Posterior cingulate gyrus (tissue), 11 donors: ENCODE measurements at regions of chr22 and their contacts with region 1.

Region 1: DNA sequence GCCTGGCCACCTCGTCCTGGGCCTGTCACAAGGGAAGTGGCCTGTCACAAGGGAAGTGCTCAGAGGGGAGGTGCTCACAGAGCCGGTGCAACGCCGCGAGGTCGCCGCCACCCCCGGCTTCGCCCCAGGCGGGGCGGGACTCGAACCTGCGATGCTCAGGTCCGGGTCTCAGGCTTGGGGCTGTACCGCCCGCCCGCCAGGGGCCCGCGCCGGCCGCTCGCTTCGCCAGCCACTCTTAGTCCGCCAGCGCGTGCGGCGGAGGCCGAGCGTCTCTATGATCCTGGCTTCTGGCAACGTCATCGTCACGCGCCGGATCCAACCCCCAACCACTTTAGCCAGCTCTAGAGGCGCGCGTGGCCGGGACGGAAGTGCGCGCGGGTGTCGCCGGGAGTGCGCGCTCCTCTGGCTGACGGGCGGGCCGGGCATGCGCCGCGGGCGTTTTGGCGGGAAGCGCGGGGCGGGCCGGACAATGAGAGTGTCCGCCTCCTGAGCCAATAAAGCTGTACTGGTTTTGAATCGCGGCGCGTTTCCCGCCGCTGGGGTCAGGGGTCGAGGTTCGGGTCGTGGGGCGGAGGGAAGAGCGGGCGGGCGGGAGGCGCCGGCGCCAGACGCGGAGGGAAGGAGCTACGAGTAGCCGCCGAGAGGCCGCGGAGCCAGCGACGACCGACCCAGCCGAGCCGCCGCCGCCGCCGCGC is at the start of gene TRMT2A:
- DNase-seq: peak; percentile 94 to 99 (median 96)

Region 2: DNA sequence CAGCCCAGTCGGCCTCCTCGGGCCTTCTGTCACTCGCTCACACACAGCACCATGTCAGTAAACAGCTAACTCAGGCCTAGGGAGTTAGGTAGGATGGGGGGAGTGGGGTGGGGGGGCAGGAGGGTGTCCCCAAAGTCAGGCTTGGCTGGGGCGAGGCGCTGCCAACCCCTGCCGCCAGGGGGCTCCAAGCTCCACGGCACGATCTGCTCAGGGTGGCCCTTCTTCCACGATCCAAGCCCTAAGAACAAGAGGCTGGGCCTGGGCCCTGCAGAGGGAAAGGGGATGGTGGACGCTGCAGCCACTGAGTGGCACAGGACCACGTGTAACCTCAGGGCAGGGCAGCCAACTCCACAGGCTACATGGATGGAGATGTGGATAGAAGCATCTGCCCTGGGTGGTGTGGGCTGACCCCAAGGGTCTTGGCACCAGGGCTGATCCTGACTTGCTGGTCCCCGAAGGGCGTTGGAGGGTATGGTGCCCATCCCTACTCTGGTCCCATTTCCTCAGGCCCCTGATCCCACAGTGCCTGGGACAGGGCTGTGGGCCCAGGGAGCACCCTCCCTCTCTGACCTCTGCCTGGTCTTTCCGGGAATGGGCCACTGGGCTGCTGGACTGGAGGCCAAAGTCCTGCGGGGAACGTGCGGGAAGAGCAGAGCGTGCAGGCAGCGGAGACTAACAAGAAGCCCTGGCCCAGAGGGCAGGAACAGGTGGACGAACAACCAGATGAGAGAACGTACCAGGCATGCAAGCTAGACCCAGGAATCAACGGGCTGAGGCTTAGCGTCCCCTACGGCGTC is 146.4 kb before region 1 on chr22:
- intact Hi-C with region 1: loop called (anchors 10 kb)
- DNase-seq: peak; percentile 47 to 96 (median 77)

Region 3: DNA sequence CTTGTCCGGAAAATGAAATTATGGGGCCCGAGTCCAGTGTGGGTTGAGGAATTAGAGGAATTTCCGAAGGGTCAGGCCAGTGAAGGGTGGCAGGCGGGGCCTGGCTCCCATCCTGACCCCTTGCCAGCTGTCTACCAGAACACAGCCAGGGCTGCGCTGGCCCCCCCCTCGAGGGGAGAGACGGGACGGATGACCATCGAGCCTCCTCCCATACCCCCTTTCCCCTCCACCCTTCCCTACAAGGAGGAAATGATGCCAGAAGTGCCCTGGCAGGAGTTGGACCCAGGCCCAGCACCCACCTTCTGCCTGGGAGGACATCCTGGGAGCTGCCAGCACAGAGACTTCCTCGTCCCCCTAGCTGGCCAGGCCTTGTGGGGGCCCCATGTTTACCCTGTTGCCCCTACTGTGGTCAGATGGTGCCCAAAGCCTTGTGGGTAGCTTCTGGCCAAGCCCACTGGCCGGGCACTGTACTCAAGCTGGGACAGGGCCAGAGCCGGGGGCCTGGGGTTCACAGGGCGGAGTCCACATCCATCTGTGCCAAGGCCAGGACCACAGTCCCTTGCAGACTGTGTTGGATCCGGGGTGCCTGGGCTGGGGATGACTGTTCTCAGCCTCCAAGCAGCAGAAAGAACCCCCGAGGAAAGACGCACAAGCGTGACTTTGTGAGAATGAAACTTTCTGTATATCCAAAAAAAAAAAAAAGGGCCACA is 121.3 kb before region 1 on chr22:
- intact Hi-C with region 1: no loop called
- DNase-seq: peak in 2 of 10 donors; percentile 49 to 77

Region 4: GRCh38 chr22:20008221-20008995 is 108.7 kb before region 1 on chr22:
- intact Hi-C with region 1: no loop called
- DNase-seq: peak in 2 of 10 donors; percentile 53 to 71

Region 5: DNA sequence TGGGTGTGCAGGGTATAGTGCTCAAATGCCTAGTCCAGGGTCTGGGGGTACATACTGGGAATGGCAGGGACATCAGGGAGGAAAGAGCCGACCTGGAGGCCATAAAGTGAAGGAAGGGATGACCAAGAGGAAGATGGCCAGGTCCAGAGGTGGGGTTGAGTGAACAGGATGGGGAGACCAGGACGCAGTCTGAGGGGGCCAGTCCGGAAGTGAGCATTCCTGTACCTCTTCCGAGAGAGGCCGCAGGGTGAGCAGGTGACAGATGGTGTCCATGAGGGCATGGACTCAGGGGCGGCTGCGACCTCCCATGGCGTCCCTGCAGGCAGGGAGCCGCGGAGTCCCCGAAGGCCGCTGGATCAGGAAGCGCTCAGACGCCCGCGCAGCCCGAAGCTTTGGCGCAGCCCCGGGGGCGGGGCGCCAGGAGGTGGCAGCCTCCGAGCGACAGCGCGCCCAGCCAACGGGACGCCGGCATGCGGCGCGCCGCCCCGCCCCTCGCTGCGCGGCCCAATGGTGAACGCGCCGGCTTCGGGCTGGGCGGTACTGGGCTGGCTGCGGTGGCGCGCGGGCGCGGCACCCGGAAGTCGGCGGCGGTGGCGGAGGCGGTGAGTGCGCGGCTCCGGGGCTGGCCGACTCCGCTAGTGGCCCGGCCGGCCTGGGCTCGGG is 96.4 kb before region 1 on chr22 and contains the start of gene TANGO2:
- intact Hi-C with region 1: loop called (anchors 10 kb)
- DNase-seq: peak; percentile 87 to 99 (median 92)

Region 6: DNA sequence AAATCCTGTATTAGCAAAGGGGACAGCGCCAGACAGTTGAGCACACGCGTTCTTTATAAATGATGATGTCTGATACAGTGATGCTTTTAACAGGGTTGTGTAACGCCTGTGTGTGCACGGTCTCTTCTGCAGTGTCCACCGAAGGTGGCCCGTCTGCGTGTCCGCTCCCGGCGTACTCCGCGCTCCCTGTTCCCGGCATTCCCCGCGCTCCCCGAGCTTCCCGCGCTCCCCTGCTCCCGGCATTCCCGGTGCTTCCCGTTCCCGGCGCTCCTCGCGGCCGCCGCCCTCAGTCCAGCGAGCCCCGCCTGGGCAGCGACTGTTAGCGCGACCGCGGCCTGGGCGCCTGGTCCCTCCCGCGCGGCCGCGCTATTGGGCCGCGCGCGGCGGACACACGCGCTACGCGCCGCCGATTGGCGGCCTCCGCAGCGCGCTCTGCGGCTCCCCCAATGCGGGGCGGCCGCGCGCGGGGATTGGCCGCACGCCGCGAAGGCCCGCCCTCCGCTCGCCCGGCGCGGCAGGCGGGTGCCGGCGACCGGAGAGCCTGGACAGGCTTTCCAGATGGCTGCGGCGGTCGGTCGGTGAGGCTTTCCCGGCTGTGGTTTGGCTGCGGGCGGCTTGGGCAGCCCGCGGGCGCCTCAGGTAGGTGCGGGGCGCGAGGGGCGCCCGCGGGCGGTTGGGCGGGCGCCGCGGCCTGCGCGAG is 37.2 kb before region 1 on chr22 and contains the start of gene DGCR8:
- intact Hi-C with region 1: loop called (anchors 1 kb)
- DNase-seq: peak; percentile 93 to 99 (median 96)

Region 7: GRCh38 chr22:20130739-20131596 is 13.9 kb after region 1 on chr22:
- intact Hi-C with region 1: loop called (anchors 2 kb)
- DNase-seq: peak; percentile 76 to 99 (median 90)

Region 8: DNA sequence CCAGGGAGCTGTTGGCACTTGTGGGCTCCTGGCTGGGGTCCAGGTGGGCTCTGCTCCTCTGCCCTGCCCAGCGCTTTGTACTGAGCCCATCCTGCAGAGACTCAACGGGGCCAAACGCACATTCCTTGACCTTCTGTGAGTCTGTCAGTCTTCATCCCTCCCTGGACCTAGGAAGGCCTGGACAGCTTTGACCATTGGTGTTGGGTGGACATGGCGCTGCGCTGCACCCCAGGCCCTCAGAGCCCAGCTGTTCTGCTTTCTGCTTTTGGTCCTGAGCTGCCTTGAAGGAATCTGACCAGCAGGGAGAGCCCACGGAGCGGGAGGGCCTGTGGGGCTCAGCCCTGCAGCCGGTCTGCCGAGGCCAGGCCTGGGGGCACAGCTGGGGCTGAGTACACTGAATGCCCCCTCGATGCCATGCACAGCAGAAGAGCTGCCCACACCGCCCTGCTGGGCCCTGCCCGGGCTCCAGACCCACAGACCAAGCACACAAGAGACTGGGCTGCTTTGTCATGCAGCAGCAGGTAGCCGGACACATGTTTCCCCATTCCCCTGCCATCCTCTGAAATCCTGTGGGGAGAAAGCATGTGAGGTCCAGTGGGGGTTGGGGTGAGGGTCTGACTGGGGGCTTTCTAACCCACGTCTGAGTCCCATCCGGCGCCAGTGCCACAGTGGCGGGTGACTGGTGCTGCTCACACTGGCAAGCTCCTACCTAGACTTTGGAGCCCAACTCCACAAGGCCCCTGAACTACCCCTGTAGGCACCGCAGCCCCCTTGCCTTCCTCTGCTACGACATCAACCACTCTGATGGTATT is 57.9 kb after region 1 on chr22:
- intact Hi-C with region 1: no loop called
- DNase-seq: no peak

Region 9: DNA sequence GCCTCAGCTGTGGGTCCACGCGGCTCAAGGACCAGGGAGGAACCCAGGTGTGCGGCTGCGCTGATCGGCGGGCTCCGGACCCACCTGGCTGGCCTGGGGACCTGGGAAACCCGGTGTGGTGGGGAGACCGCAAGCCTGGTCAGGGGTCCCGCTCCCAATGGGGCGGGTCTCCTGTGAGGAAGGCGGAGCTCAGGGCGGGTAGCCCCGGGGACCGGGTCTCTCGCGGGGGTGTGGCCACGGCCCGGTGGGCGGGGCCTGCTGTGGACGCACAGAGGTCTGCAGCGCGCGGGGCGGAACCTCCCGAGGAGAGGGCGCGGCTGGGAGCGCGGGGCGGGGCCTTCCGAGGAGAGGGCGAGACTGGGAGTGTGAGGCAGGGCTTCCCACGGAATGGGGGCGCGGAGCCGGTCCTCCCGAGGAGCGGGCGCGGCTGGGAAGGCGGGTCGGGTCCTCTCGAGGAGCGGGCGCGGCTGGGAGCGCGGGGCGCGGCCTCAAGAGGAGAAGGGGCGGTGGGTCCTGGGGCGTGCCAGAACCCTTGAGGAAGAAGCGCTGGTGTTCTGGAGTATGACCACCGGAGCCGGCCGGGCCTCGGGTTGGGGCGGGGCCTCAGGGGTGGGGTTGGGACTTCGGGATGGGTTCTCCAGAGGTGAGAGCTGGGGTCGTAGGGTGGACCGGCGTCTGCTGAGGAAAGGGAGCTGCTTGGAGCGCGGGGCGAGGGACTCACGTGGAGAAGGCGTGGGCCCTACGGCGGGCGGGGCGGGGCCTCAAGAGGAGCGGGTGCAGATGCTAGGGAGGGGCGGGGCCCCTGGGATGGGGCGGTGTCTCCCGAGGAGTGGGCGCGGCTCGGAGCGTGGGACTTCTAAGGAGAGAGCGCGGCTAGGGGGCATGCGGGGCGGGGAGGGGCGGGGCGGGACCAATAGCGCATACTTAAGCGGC is 182.0 kb after region 1 on chr22:
- intact Hi-C with region 1: no loop called
- DNase-seq: peak; percentile 35 to 96 (median 70)